ENCODE measurements at regions of chr6 and their contacts with region 1.

Region 1: DNA sequence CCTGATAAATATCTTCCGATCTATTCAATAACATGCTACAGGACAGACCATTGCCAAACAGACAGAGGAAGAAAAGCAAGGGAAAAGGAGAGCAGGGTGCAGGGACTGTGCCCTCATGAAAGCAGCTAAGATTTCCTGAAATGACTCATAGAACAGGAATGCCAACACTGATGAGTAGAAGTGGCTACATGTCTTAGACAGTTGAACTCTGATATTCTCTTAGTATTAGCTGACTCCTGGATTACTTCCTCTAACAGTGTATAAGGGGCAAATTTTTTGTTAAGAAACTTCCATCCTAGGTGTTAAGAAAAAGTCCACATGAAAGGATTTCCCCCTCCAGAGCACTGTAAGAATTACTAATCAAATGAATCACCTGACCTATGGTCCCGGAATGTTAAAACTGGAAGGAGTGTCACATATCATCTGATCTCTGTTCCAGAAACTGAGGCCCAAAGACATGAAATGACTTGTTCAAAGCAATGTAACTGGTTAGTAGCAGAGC is 224.9 kb downstream of the IBTK start:
- DNase-seq: no peak
- ATAC-seq: no peak
- H3K4me3 ChIP-seq: no peak overlapping the region
- H3K27ac ChIP-seq: no peak overlapping the region
- H3K4me1 ChIP-seq: peaks cover 0 to 3% of the 10 kb centered on the region in 2 donors
- H3K27me3 ChIP-seq: no peaks in the 10 kb centered on the region

Region 2: GRCh38 chr6:81962214-81962613 is 60.4 kb before region 1 on chr6:
- intact Hi-C with region 1: no loop called
- DNase-seq: no peak
- ATAC-seq: no peak
- H3K4me3 ChIP-seq: no peak overlapping the region
- H3K27ac ChIP-seq: no peak overlapping the region
- H3K4me1 ChIP-seq: no peaks in the 10 kb centered on the region
- H3K27me3 ChIP-seq: no peaks in the 10 kb centered on the region

Region 3: DNA sequence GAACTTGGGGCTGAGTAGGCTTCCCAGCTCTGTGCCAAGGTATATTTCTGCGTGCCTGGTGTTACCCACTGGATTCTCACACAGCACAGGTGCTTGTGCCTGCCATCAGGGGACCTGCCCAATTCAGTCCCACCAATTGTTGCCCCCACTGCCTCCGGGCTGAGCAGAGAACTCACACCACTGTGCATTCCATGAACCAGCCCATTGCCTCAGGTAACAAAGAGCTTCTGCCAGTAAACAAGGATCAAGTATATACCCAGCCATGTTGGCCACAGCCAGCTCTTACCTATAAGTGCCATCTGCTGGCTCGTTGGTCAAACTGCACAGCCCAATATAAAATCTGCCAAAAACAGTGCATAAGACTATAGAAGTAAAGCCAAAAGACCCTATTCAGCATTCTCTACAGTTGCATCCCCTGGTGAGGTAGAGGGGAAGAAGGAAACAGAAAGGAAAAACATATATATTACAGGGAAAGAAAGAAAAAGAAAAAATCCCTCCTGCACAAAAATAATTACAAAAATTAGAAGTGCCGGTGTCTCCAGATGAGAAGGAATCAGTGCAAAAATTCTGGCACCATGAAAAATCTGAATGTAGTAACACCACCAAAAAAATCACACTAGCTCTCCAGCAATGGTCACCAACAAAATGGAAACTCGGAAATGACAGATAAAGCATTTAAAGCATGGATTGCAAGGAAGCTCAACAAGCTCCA is 16.5 kb before region 1 on chr6:
- intact Hi-C with region 1: loop called in 1 of 2 experiments (anchors 1 kb)
- DNase-seq: peak; percentile 39 to 48
- ATAC-seq: no peak
- H3K4me3 ChIP-seq: no peak overlapping the region
- H3K27ac ChIP-seq: no peak overlapping the region
- H3K4me1 ChIP-seq: no peaks in the 10 kb centered on the region
- H3K27me3 ChIP-seq: no peaks in the 10 kb centered on the region

Region 4: DNA sequence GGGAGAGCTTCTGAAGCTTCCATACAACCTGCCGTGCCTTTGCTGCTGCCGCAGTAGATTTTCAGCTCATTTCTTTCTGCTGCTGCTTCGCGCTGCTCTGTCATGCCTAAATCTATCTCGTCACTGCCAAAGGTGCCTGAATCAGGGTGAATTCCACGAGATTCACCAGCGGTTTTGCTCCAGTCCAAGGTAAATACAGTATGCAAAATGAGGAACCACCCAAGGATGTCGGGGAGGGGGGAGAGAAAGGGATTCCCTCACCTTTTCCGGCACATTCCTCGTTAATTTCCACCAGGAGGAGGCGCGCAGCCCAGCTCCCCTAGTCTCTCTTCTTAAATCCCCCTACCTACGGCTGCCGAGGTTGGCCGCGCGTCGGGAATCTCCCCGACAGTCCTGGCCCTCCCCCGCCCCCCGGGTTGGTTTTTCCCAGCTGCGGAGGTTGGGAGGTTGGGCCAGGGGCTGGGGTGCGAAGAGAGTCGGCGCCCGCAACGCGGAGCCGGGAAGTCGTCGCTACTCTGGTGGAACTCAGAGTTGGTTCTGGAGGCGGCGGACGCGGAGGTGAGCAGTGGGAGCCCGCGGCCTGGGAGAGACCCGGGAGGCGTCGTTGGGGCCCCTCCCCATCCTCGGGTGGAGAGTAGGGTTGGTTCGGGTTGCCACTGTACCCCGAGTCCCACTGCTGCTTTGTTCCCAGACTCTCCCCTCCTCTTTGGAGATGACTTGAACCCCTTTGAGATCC is 340.9 kb after region 1 on chr6 and contains the start of gene TPBG:
- intact Hi-C with region 1: no loop called
- DNase-seq: peak; percentile 67 to 88
- ATAC-seq: peak; percentile 82
- H3K4me3 ChIP-seq: peak within 1 kb of the TSS; percentile 85 to 95
- H3K27ac ChIP-seq: peak within 1 kb of the TSS; percentile 8 to 38
- H3K4me1 ChIP-seq: peaks cover 0 to 2% of the 10 kb centered on the region in 2 donors
- H3K27me3 ChIP-seq: no peaks in the 10 kb centered on the region
- total RNA-seq, gene TPBG: 20.1 to 27.6 TPM

Measured in aorta (tissue), 5 donors.